Mucosa of descending colon (tissue), 3 donors: ENCODE measurements at regions of chr12 and their contacts with region 1.

Region 1: DNA sequence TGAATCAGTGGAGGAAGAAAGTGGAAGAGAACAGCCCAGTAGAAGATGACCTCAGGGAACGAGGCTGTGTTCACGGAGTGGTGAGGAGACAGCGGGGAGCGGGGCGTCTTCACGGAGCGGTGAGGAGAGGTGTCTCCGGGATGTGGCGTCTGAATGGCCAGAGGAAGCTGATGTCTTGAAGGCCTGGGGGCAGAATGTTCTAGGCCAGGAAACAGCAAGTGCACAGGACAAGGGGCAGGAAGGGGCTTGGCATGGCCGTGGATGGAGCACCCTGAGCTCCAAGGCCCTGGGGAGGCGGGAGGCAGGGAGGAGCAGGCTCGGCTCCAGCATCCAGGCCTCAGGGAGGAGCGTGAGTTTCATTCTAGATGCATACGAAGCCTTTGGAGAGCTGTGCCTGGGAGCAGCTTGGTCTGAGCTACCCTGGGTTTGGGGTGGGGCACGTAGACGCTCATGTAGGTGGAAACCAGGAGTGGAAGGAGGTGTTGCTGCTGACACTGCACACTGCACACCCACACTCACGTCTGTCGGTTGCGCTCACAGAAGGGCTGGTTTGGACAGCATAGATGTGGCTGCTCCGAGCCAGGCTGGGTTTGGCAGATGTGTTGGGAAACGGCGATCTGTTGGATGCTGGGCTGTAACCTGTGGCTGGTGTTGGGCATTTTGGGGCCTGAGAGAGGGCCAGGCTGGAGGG is 131.6 kb downstream of the ADGRD1 start:
- DNase-seq: peak in 1 of 3 donors; percentile 37
- ATAC-seq: no peak
- H3K4me3 ChIP-seq: no peak overlapping the region
- H3K4me1 ChIP-seq: no peaks in the 10 kb centered on the region
- CTCF ChIP-seq: no peak

Region 2: DNA sequence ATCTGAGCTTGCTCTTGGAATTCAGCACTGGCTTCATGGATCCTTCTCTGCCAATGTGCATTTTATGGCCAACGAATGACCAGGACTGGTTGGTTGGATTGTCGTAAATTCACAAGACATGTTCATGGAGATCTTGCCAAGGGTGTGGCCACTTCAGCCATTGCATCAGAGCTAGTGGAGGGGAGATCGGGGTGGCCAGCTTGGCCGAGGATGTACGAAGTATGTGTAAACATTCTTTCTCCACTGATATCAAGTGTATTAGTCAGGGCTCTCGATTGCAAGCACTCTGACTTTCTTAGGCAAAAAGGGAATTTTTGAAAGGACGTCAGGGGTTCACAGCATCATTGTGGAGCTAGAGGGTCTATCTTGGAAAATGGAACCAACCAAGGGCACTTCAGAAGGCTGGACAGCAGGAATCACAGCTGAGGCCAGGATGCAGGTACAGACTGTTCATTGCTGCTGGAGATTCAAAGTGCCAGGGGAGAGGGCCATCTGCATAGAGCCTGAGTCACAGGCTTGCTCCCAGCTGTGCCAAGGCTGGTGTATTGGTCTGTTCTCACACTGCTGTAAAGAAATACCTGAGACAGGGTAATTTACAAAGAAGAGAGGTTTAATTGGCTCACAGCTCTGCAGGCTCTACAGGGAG is 164.4 kb before region 1 on chr12:
- intact Hi-C with region 1: no loop called
- DNase-seq: peak in 2 of 3 donors; percentile 37 to 66
- ATAC-seq: peak; percentile 54
- H3K4me3 ChIP-seq: no peak overlapping the region
- H3K4me1 ChIP-seq: no peaks in the 10 kb centered on the region
- CTCF ChIP-seq: no peak

Region 3: GRCh38 chr12:131044760-131045381 is 40.4 kb before region 1 on chr12:
- intact Hi-C with region 1: loop called in 1 of 2 experiments (anchors 5 kb)
- DNase-seq: peak in 1 of 3 donors; percentile 39
- ATAC-seq: no peak
- H3K4me3 ChIP-seq: no peak overlapping the region
- H3K4me1 ChIP-seq: no peaks in the 10 kb centered on the region
- CTCF ChIP-seq: no peak